Motor neuron (in vitro differentiated cells): ENCODE measurements at regions of chr6 and their contacts with region 1.

Region 1: GRCh38 chr6:29705389-29706231 is 17.6 kb upstream of the HLA-F start:
- ATAC-seq: peak in 6 of 8 experiments; percentile 33 to 70 (median 56)
- H3K4me3 ChIP-seq: no peak overlapping the region
- H3K27ac ChIP-seq: no peak overlapping the region
- H3K4me1 ChIP-seq: no peaks in the 10 kb centered on the region

Region 2: DNA sequence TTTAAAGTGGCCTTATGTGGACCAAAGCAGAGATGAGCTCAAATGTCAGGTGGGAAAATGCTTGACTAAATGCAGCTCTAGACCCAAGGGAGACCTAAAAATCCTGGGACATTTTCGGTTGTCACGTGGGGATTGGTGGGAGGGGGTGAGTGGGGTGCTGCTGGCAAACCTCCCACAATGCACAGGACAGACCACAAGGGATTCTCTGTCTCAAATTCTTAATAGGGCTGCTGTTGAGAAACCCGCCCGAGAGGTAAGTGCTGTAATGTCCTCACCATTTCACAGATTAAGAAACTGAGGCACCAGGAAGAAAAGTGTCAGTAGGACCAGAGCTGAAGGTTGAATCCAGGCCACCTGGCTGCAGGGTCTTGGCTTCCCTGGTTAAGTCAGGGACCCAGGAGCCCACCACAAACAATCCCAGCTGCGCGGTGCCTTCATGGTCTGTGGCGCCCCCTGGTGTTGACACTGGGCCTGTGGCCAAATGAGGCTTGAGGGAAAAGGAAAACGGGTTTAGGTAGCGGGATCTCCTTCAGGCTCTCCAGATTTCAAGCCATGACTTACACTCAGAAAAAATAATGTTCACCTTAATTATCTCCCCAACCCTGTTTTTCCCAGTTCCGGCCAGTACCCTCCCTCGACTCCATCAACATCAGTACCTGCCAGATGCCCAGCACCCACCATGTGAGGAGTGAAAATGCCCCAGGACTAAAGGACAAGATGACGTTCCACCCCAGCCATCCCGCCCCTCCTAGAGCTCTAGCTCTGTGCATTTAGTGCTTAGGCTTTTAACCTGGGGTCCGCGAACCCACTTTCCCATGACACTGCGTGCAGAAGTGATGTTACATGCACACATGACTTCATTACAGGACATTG is 129.2 kb after region 1 on chr6:
- in situ Hi-C with region 1: loop called in 2 of 9 experiments (anchors 10 to 25 kb)
- ATAC-seq: peak in 3 of 8 experiments; percentile 60 to 72 (median 69)
- H3K4me3 ChIP-seq: no peak overlapping the region
- H3K27ac ChIP-seq: no peak overlapping the region
- H3K4me1 ChIP-seq: no peaks in the 10 kb centered on the region

Region 3: GRCh38 chr6:30044630-30045029 is 339.0 kb after region 1 on chr6:
- in situ Hi-C with region 1: no loop called
- ATAC-seq: peak in 4 of 8 experiments; percentile 30 to 80 (median 35)
- H3K4me3 ChIP-seq: no peak overlapping the region
- H3K27ac ChIP-seq: no peak overlapping the region
- H3K4me1 ChIP-seq: no peaks in the 10 kb centered on the region